Posterior vena cava (tissue), 2 donors: ENCODE measurements at regions of chr3 and their contacts with region 1.

Region 1: DNA sequence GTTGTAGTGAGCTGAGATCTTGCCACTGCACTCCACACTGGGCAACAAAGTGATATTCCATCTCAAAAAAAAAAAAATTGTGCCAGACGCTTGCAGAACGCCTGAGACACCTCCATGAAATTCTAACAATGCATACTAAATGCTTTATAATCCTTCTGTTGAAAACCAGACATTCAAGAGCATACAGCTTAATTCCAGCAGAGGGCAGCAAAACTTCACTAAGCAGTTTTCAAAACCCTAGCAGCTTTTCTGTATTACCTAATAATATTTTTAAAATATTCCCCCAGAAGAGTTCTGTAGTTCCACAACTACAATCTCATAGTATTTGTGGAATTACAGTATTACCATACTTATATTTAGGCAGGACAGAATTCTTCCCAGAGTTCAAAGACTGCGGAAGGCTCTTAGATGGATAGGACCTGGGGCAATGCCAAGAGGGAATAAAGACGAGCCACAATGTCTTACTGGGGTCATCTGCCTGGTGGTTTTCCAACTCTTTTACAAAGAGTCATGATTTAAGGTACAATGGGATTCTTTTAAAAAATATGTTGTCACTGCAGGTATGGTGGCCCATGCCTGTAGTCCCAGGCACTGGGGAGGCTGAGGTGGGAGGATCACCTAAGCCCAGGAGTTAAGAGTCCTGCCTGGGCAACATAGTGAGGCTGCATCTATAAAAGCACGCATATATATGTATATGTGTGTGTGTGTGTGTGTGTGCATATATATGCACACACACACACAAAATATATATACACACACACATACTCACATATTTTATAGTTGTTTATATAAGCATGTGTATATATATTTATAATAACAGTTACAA is 19.6 kb upstream of the TASOR start:
- DNase-seq: no peak

Region 2: GRCh38 chr3:54967731-54968161 is 1735.0 kb before region 1 on chr3:
- intact Hi-C with region 1: no loop called
- DNase-seq: no peak

Region 3: GRCh38 chr3:56775838-56776555 is 73.3 kb after region 1 on chr3:
- intact Hi-C with region 1: loop called in 1 of 2 experiments (anchors 10 kb)
- DNase-seq: no peak

Region 4: GRCh38 chr3:56801662-56802377 is 99.1 kb after region 1 on chr3 and contains the start of gene ARHGEF3:
- intact Hi-C with region 1: loop called in 1 of 2 experiments (anchors 5 kb)
- DNase-seq: peak; percentile 96
- total RNA-seq, gene ARHGEF3: 20.3 to 24.2 TPM

Region 5: GRCh38 chr3:56878074-56878473 is 175.4 kb after region 1 on chr3:
- intact Hi-C with region 1: no loop called
- DNase-seq: no peak